Gastrocnemius medialis (tissue), 4 donors: ENCODE measurements at regions of chr7 and their contacts with region 1.

Region 1: DNA sequence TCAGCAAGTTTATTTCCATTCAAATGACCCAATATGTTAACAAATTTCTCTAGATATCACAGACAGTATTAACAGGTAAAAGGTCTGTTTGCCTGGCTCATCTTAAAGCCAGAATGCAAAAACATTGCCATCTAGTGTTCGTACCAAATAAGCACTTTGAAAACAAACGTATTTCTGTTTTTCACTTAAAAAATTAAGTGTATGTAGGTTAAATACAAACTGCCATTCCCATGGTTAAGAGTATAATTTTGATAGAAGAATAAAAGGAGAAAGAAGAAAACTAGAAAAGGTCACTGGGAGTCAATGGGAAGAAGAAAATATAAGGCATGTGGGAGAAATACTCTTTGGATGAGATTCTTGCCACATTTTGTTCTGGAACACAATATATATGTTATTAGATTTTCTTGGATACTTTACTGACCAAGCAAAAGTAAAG is 51.0 kb downstream of the ORC5 start:
- DNase-seq: no peak
- ATAC-seq: no peak
- H3K4me3 ChIP-seq: no peak overlapping the region
- H3K27ac ChIP-seq: no peak overlapping the region
- H3K4me1 ChIP-seq: no peaks in the 10 kb centered on the region
- H3K27me3 ChIP-seq: no peaks in the 10 kb centered on the region
- CTCF ChIP-seq: peak in 4 of 5 experiments; percentile 28 to 51 (median 39)
- POLR2A ChIP-seq: no peak

Region 2: DNA sequence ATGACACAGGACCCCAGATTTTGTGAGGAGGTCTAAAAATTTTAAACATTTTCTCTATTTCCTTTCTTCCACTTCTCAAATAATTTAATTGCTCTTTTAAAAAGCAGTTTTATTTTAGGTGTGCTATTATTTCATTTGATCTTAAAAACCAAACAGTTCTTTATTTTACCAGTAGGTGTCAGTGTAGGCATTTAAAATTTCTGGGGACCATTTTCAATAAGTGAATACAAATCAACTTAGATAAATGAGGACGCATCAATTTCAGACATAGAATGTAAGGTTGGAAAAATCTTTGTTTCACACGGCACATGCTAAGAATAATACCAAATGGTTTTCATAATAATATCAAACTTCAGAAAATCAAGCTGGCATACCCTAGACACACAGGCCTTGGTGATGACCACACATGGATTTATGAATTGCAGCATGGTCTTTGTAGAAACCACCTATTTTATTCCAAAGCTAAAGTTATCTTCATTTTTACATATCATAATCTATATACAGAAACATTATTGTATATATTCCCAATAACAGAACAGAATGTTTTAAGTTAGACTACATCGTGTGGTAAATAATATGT is 583.3 kb before region 1 on chr7:
- in situ Hi-C with region 1: loop called in 2 of 4 experiments (anchors 10 to 25 kb)
- intact Hi-C with region 1: loop called (anchors 2 kb)
- DNase-seq: no peak
- ATAC-seq: no peak
- H3K4me3 ChIP-seq: no peak overlapping the region
- H3K27ac ChIP-seq: no peak overlapping the region
- H3K4me1 ChIP-seq: no peaks in the 10 kb centered on the region
- H3K27me3 ChIP-seq: no peaks in the 10 kb centered on the region
- CTCF ChIP-seq: peak in 3 of 5 experiments; percentile 48 to 64 (median 49)
- POLR2A ChIP-seq: no peak

Region 3: DNA sequence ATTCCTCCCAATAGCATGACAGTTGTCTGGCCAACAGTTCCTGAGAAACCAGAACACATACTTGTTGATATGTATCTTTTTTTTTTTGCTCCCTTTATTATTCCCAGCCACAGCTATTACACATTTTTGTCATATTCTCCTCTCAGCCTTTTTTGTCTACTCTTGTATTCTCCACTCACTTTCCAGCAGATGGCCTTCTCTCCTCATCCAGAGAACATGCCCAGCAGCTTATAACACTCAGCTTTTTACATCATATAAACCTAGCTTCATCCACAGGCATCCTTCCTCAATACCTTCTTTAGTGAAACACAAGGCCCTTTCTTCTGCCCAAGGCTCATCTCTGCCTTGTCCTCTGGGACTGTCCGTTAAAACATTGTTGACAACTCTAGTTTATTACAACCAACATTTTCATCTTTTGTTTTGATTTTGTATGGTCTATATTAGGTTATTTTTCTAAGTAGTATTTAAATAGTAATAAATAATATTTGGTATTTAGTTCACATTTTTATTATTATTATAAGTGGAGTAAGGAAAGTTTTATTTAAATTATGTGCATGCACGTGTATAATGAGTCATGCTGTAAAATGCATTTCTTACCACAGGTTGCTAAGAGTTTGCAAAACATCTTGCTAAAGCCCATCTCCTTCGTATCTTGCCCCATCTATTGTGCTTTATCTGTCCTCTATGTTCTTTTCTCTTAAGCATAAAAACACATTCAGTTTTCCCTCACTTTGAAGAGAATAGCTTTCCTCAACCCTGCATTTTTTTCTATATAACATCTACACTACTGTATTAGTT is 50.6 kb before region 1 on chr7:
- in situ Hi-C with region 1: no loop called
- intact Hi-C with region 1: loop called (anchors 1 kb)
- DNase-seq: no peak
- ATAC-seq: peak in 1 of 2 donors; percentile 50
- H3K4me3 ChIP-seq: no peak overlapping the region
- H3K27ac ChIP-seq: no peak overlapping the region
- H3K4me1 ChIP-seq: no peaks in the 10 kb centered on the region
- H3K27me3 ChIP-seq: no peaks in the 10 kb centered on the region
- CTCF ChIP-seq: peak in 2 of 5 experiments; percentile 8 to 28
- POLR2A ChIP-seq: no peak